Activated naive CD4-positive, alpha-beta T cell treated with anti-CD3 and anti-CD28 coated beads for 36 hours (primary cell): ENCODE measurements at regions of chr1 and their contacts with region 1.

Region 1: DNA sequence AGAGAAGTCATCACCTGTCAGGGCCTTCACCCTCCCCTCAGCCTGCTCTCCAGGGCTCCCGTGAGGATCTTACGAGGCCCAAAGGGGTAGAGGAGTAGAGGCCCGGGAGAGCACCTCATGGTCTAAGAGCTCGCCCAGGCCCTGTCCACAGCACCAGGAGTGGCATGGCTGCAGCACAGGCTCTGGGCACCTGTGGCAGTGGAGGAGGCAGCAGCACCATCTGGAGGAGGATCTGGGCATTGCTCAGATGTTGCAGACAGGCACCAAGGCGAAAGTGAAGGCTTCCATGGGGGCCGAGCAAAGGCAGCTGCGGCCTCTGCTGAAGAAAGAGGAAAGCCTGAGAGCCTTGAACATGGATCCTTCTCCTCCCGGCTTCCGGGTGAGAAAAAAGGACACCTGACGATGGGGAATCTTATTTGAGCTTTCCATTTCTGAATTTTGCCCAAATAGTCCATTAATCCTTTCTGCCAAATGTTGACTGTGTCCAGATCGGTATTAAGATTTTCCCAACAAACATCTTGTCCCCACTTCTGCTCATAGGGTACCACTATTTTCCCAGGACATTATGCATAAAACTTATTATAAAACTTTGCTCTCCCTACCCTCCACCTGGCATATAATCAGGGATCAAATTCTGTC is 604.7 kb downstream of the PTPRC start:
- DNase-seq: peak; percentile 86
- H3K4me3 Mint-ChIP-seq: no peak overlapping the region
- H3K27ac Mint-ChIP-seq: no peak overlapping the region
- H3K4me1 Mint-ChIP-seq: no peaks in the 10 kb centered on the region
- H3K27me3 Mint-ChIP-seq: peaks cover 9% of the 10 kb centered on the region

Region 2: DNA sequence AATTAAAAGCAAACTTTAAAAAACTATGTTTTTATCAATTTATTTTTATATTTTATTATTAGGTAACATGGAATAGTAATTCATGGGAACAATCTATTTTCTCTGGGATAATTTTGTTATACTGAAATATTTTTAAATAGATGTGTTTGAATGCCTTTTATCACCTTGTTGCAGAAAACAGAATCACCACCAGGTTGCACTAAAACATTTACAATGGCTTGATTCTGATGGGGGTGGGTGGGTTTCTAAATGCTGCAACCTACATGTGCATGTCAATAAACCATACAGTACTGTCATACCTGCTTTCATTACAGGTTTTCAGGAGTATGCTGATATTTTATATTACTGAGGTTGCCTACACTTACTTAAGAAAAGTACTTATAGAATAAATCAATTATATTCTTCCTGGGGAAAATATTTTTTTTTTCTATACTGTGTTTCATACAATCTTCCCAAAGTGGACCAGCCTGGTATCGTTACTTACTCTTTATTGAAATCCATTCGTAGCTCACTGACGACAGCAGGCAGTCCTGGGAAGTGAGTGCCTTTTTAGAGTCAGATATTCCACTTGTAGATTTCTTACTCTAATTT is 471.9 kb before region 1 on chr1:
- CTCF ChIA-PET with region 1: interaction called, 6 read pairs
- intact Hi-C with region 1: loop called (anchors 1 kb)
- DNase-seq: no peak
- H3K4me3 Mint-ChIP-seq: no peak overlapping the region
- H3K27ac Mint-ChIP-seq: no peak overlapping the region
- H3K4me1 Mint-ChIP-seq: peaks cover 5% of the 10 kb centered on the region
- H3K27me3 Mint-ChIP-seq: no peaks in the 10 kb centered on the region

Region 3: DNA sequence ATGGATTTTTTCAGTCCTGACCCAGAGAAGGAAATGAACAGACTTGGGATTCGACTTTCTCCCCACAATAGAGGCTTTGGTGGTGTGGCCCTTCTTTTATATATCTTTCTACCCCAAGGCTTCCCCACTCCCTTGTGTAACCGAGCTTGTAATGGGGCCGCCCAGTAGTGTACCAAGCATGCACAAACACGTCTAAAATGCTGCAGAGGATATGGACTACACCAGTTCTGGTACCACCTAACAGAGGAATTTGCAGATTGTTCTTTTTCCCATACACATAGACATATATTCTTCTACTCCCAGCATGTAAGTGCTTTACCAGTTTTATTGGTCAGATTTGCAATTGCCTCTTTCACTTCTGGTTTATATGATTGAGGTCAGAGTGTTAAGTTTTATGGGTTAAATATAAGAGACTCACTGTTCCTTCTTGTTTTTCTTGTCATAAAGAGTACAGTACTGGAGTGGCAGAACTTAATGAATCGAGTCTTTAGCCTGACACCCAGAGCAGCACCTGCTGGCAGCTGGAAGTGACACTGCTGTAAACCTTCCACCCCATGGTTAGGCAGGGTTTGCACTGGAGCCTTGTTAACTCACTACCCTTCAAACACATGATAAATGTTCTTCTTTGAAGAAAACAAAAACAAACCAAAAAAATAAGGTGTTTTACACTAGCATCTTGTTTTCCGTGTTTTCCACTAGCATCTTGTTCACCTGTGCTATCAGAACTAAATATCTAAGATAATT is 406.1 kb before region 1 on chr1:
- CTCF ChIA-PET with region 1: no interaction called
- intact Hi-C with region 1: loop called (anchors 2 kb)
- DNase-seq: no peak
- H3K4me3 Mint-ChIP-seq: no peak overlapping the region
- H3K27ac Mint-ChIP-seq: no peak overlapping the region
- H3K4me1 Mint-ChIP-seq: no peaks in the 10 kb centered on the region
- H3K27me3 Mint-ChIP-seq: no peaks in the 10 kb centered on the region

Region 4: GRCh38 chr1:199113265-199113869 is 130.2 kb before region 1 on chr1:
- CTCF ChIA-PET with region 1: interaction called, 25 read pairs
- intact Hi-C with region 1: loop called (anchors 1 kb)
- DNase-seq: peak; percentile 87
- H3K4me3 Mint-ChIP-seq: no peak overlapping the region
- H3K27ac Mint-ChIP-seq: no peak overlapping the region
- H3K4me1 Mint-ChIP-seq: no peaks in the 10 kb centered on the region
- H3K27me3 Mint-ChIP-seq: no peaks in the 10 kb centered on the region

Region 5: GRCh38 chr1:199287647-199288046 is 44.1 kb after region 1 on chr1:
- CTCF ChIA-PET with region 1: no interaction called
- intact Hi-C with region 1: no loop called
- DNase-seq: no peak
- H3K4me3 Mint-ChIP-seq: no peak overlapping the region
- H3K27ac Mint-ChIP-seq: no peak overlapping the region
- H3K4me1 Mint-ChIP-seq: peaks cover 12% of the 10 kb centered on the region
- H3K27me3 Mint-ChIP-seq: peaks cover 6% of the 10 kb centered on the region

Region 6: DNA sequence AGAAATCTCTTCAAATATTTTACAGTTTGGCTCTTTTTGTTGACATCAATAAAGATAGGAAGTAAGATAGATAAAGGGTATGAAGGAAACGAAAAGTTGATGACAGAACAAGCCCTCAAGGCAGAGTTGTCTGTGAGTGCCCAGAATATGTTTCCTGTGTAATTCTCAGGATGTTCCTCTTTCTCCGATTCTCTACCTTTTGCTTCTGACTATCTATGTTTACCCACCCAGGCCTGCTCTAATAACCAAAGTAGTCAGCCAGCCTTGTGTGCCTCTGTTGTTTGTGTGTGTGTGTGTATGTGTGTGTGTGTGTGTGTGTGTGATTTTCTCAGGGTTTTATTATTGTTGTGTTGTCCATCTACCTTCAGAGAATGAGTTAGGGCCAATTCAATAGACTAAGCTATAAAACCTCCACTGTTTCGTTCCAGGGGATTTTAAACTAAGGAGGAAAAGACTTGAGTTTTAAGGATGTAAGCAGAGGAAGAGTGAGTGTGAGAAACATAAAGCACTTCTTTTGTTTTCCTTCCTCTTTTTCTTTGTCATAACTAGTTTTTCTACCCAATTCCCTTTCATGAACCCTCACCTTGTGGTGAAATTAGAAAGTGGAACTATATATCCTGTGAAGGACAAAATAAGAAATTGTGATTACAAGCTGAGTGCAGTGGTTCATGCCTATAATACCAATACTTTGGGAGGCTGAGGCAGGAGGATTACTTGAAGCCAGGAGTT is 156.6 kb after region 1 on chr1:
- CTCF ChIA-PET with region 1: no interaction called
- intact Hi-C with region 1: no loop called
- DNase-seq: no peak
- H3K4me3 Mint-ChIP-seq: no peak overlapping the region
- H3K27ac Mint-ChIP-seq: no peak overlapping the region
- H3K4me1 Mint-ChIP-seq: no peaks in the 10 kb centered on the region
- H3K27me3 Mint-ChIP-seq: peaks cover 8% of the 10 kb centered on the region

Region 7: GRCh38 chr1:199551967-199552565 is 308.5 kb after region 1 on chr1:
- CTCF ChIA-PET with region 1: no interaction called
- intact Hi-C with region 1: loop called (anchors 5 kb)
- DNase-seq: peak; percentile 61
- H3K4me3 Mint-ChIP-seq: no peak overlapping the region
- H3K27ac Mint-ChIP-seq: no peak overlapping the region
- H3K4me1 Mint-ChIP-seq: no peaks in the 10 kb centered on the region
- H3K27me3 Mint-ChIP-seq: peaks cover 10% of the 10 kb centered on the region